Activated CD4-positive, alpha-beta T cell treated with anti-CD3 and anti-CD28 coated beads for 36 hours (primary cell): ENCODE measurements at regions of chr6 and their contacts with region 1.

Region 1: GRCh38 chr6:33711140-33712129 is at the start of gene UQCC2:
- DNase-seq: peak; percentile 99
- ATAC-seq: peak; percentile 99
- H3K4me3 Mint-ChIP-seq: peak within 1 kb of the TSS; percentile 90
- H3K27ac Mint-ChIP-seq: peak within 1 kb of the TSS; percentile 96
- H3K4me1 Mint-ChIP-seq: peaks cover 34% of the 10 kb centered on the region
- H3K27me3 Mint-ChIP-seq: no peaks in the 10 kb centered on the region
- total RNA-seq, gene UQCC2: 141 to 147 TPM

Region 2: GRCh38 chr6:33579828-33580714 is 131.4 kb before region 1 on chr6 and contains the start of gene BAK1:
- CTCF ChIA-PET with region 1: interaction called, 11 read pairs
- POLR2A ChIA-PET with region 1: no interaction called
- intact Hi-C with region 1: loop called in 1 of 2 experiments (anchors 2 kb)
- DNase-seq: peak; percentile 92
- ATAC-seq: peak; percentile 95
- H3K4me3 Mint-ChIP-seq: peak within 1 kb of the TSS; percentile 95
- H3K27ac Mint-ChIP-seq: peak within 1 kb of the TSS; percentile 98
- H3K4me1 Mint-ChIP-seq: peaks cover 31% of the 10 kb centered on the region
- H3K27me3 Mint-ChIP-seq: no peaks in the 10 kb centered on the region
- total RNA-seq, gene BAK1: 37.0 to 43.3 TPM

Region 3: GRCh38 chr6:33633462-33634158 is 77.8 kb before region 1 on chr6:
- CTCF ChIA-PET with region 1: no interaction called
- POLR2A ChIA-PET with region 1: no interaction called
- intact Hi-C with region 1: loop called in 1 of 2 experiments (anchors 1 kb)
- DNase-seq: peak; percentile 68
- ATAC-seq: peak; percentile 78
- H3K4me3 Mint-ChIP-seq: peak overlapping the region; percentile 71
- H3K27ac Mint-ChIP-seq: peak overlapping the region; percentile 42
- H3K4me1 Mint-ChIP-seq: peaks cover 64% of the 10 kb centered on the region
- H3K27me3 Mint-ChIP-seq: no peaks in the 10 kb centered on the region

Region 4: DNA sequence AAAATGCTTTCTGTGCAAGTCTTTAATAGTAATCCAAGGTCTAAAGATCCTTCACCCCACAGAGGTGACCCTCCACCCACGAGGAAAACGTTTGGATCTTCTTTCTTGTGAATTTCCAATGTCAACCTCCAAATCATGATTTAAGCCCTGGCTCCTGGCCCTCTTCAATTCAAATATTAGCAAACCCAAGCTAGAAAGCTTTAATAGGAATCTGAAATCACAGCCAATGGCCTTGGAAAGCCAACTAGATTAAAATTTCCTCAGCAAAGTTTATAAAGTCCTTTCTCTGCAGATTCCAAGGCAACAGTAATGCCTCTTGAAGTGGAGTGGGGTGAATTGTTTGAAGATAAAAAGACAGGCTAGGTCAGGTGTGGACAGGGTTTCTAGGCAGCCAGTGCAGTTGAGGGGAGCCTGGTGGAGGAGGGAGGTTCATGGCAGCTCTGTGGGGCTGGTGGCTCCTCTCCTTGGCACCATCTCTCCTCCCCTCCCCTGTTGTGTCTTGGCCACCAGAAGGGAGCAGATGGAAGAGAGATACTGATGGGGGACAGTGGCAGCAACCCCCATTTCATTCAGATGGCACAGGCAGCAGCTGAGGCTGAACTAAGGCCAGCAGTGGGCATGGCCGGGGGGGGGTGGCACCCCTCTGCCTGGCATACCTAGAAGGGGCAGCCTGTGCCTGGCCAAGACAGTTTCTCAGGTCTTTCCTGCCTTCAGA is 12.1 kb after region 1 on chr6:
- CTCF ChIA-PET with region 1: interaction called, 10 read pairs
- POLR2A ChIA-PET with region 1: interaction called, 3 read pairs
- intact Hi-C with region 1: no loop called
- DNase-seq: no peak
- ATAC-seq: no peak
- H3K4me3 Mint-ChIP-seq: no peak overlapping the region
- H3K27ac Mint-ChIP-seq: no peak overlapping the region
- H3K4me1 Mint-ChIP-seq: peaks cover 17% of the 10 kb centered on the region
- H3K27me3 Mint-ChIP-seq: no peaks in the 10 kb centered on the region

Region 5: DNA sequence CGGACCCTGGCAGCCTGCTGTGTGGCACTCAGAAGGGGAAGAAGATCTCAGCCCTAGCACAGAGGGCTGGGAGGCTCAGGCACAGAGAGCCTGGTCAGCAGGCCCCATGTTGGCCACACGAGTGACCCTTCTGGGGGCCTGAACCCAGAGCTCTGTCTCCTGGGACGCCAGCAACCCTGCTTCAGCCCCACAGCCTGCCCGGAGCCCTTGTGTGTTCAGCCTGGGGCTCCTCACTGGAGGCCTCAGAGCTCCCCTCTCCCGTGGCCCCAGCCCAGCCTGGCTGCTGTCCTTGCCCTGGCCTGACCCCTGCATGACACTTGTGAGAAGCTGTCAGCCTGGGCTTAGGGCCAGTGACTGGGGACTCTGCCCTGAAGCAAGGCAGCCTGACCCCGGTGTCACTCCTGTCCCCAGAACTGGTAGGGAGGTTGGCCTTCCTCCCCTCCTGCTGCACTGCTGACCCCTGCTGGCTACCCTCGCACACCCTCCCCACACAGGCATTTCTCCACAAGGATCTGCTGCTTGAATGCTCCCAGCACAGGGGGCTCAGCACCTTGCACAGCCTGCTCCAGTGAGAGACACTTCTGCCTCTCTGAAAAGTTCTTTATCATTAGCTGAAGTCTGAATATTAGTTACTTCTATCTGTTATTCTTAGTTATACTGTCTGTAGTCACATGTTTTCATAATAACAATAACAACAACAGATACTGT is 50.6 kb after region 1 on chr6:
- CTCF ChIA-PET with region 1: interaction called, 9 read pairs
- POLR2A ChIA-PET with region 1: no interaction called
- intact Hi-C with region 1: loop called in 1 of 2 experiments (anchors 1 kb)
- DNase-seq: peak; percentile 75
- ATAC-seq: peak; percentile 85
- H3K4me3 Mint-ChIP-seq: no peak overlapping the region
- H3K27ac Mint-ChIP-seq: no peak overlapping the region
- H3K4me1 Mint-ChIP-seq: no peaks in the 10 kb centered on the region
- H3K27me3 Mint-ChIP-seq: no peaks in the 10 kb centered on the region